ENCODE measurements at regions of chr7 and their contacts with region 1.

Region 1: DNA sequence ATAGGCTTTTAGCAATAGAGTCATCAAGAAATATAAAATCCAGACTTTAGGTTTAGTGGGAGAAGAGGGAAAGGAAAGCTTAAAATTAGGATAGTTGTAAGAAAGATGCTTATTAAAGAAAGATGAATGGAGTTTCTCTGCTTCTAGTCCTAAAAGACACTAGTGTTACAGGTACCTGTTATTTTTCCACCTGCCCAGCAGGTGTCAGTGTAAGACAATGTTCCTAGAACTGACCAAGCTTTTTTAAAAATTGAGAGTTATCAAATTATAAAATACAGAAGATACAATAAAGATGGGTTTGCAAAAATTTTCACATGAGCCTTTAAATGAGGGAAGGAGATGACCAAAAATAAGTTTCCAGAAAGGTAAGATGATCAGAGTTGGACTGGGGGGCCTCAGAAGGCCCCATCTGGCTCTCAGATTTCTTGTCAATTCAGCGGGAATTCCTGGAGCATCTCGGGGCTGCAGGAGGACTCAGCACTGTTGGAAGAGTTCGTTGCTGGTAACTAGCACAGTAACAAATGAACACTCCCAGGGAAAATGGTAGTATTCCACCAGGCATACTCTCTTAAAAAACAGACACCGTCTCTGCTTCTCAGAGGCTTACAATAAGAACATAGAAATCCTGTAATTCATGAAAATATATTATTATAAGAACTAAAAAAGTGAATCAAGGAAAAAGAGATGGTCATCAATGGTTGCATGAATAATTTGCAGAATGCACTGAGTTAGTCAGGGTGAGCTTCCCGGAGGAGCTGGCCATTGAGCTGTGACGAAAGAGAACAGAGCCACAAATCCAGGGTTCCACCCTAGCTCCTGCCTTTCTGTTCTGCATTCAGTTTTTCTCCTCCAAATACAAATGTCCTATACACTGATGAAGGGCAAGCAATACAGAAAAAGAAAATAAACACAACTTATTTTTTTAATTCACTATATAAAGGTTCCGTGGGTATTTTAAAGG is 71.8 kb upstream of the PIK3CG start:
- DNase-seq: no peak
- ATAC-seq: peak; percentile 68
- H3K4me3 Mint-ChIP-seq: no peak overlapping the region
- H3K27ac Mint-ChIP-seq: no peak overlapping the region
- H3K4me1 Mint-ChIP-seq: no peaks in the 10 kb centered on the region
- H3K27me3 Mint-ChIP-seq: peaks cover 1% of the 10 kb centered on the region
- CTCF ChIP-seq: peak; percentile 84

Region 2: DNA sequence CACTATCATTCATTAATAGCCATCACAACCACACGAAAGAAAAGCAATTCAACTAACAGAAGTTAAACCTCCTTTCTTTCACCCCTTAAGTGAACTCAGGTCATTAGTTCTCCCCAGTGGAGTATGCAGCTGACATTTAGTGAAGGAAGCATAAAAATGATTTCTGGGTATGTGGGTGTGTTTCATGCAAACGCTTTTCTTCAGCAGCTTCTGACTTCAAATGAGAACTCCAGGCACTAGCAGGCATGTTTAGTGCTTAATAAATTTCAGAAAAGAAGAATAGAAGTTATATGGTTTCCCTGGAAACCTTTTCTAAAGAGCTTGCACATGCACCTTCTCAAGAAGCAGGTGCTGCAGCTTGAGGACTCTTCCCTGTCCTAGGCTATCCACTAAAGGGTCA is 134.2 kb after region 1 on chr7:
- CTCF ChIA-PET with region 1: no interaction called
- POLR2A ChIA-PET with region 1: no interaction called
- intact Hi-C with region 1: no loop called
- DNase-seq: no peak
- ATAC-seq: no peak
- H3K4me3 Mint-ChIP-seq: no peak overlapping the region
- H3K27ac Mint-ChIP-seq: no peak overlapping the region
- H3K4me1 Mint-ChIP-seq: no peaks in the 10 kb centered on the region
- H3K27me3 Mint-ChIP-seq: no peaks in the 10 kb centered on the region
- CTCF ChIP-seq: no peak

Region 3: DNA sequence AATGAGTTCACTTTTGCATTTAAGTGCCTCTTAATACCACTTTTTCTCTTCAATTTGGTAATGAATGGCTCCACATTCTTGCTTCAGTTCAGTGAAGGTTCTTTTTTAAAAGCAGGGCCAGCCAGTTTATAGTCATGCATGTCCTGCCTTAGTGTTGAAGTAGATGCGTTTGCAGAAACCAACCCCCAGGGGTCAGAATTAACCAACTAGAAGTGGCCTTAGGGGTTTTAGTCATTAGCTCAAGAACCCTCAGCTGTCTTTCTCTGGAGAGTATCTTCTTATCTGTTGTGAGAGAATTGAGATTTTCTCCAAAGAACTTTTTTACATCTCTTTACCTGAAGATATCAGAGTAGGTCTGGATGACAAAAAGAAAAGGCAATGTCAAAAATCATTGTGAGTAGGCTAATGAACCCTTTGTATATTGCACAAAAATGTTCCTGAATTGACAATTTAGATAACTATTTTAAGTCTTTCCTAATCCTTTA is 154.0 kb after region 1 on chr7:
- CTCF ChIA-PET with region 1: interaction called, 16 read pairs
- POLR2A ChIA-PET with region 1: no interaction called
- intact Hi-C with region 1: loop called (anchors 5 kb)
- DNase-seq: peak; percentile 58
- ATAC-seq: peak; percentile 85
- H3K4me3 Mint-ChIP-seq: no peak overlapping the region
- H3K27ac Mint-ChIP-seq: no peak overlapping the region
- H3K4me1 Mint-ChIP-seq: no peaks in the 10 kb centered on the region
- H3K27me3 Mint-ChIP-seq: no peaks in the 10 kb centered on the region
- CTCF ChIP-seq: peak; percentile 61

Region 4: GRCh38 chr7:107044347-107045194 is 251.3 kb after region 1 on chr7 and contains the start of gene PRKAR2B:
- CTCF ChIA-PET with region 1: interaction called, 4 read pairs
- POLR2A ChIA-PET with region 1: no interaction called
- intact Hi-C with region 1: loop called (anchors 5 kb)
- DNase-seq: peak; percentile 74
- ATAC-seq: peak; percentile 87
- H3K4me3 Mint-ChIP-seq: peak within 1 kb of the TSS; percentile 65
- H3K27ac Mint-ChIP-seq: peak within 1 kb of the TSS; percentile 7
- H3K4me1 Mint-ChIP-seq: peaks cover 5% of the 10 kb centered on the region
- H3K27me3 Mint-ChIP-seq: peaks cover 32% of the 10 kb centered on the region
- CTCF ChIP-seq: no peak
- total RNA-seq, gene PRKAR2B: 1.1 to 1.3 TPM

Measured in activated CD8-positive, alpha-beta T cell treated with anti-CD3 and anti-CD28 coated beads for 36 hours (primary cell).